ENCODE measurements at regions of chr3 and their contacts with region 1.

Region 1: DNA sequence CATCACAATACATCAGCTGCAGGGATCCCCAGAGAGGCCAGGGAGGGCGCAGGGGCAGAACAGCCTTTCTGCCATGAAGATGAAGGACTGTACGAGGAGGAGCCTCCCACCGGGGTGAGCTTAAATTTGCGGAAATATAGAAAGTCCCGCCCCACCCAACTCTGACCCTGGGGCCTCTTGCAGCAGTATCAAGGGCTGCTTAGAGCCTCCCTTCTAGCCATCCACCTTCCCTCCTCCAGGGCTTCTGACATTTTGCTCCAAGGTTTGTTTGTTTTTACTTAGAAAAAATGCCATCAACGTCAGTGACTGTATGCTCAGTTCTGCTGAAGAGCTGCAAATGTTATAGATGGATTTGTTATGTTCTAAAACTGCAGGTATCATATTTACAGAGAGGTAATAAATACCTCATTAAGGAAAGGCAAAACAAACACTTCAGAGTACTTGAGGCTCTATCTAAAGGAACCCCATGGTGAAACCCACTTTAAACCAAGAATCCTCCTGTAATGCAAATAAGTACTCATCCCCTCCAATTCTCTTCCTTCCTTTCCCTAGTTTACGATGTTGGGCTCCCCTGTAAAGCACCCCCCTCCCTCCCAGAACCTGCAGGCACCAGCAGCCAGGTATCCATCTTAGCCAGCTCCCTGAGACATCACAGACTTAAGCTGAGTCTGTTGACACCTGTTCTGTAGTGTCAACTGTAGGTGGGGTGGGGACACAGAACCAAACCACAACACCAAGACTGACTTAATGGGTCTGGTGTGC is 30.5 kb downstream of the RFTN1 start:
- DNase-seq: peak; percentile 39
- ATAC-seq: no peak; the same call in 1 of the 2 replicates
- H3K4me3 ChIP-seq: no peak overlapping the region
- H3K27ac ChIP-seq: peak overlapping the region; percentile 78
- H3K4me1 ChIP-seq: peaks cover 38% of the 10 kb centered on the region
- H3K27me3 ChIP-seq: no peaks in the 10 kb centered on the region
- CTCF ChIP-seq: no peak
- POLR2A ChIP-seq: no peak
- RAD21 ChIP-seq: no peak

Region 2: GRCh38 chr3:16448639-16449070 is 34.3 kb before region 1 on chr3:
- CTCF ChIA-PET with region 1: no interaction called
- POLR2A ChIA-PET with region 1: no interaction called
- dilution Hi-C with region 1: no loop called
- in situ Hi-C with region 1: no loop called
- intact Hi-C with region 1: loop called (anchors 5 kb)
- DNase-seq: peak; percentile 98
- ATAC-seq: peak; percentile 97
- H3K4me3 ChIP-seq: no peak overlapping the region
- H3K27ac ChIP-seq: no peak overlapping the region
- H3K4me1 ChIP-seq: peaks cover 13% of the 10 kb centered on the region
- H3K27me3 ChIP-seq: no peaks in the 10 kb centered on the region
- CTCF ChIP-seq: no peak
- POLR2A ChIP-seq: no peak
- RAD21 ChIP-seq: 0 out of 2 replicates have a peak, but pooled peaks have one; percentile 39